CD4-positive, alpha-beta T cell (primary cell): ENCODE measurements at regions of chr3 and their contacts with region 1.

Region 1: GRCh38 chr3:142586803-142587406 is 8.4 kb upstream of the ATR start:
- DNase-seq: peak in 6 of 14 experiments; percentile 6 to 72 (median 48)
- ATAC-seq: peak; percentile 74
- H3K4me3 ChIP-seq: no peak overlapping the region
- H3K4me3 Mint-ChIP-seq: no peak overlapping the region
- H3K27ac ChIP-seq: no peak overlapping the region
- H3K27ac Mint-ChIP-seq: no peak overlapping the region
- H3K4me1 ChIP-seq: no peaks in the 10 kb centered on the region
- H3K4me1 Mint-ChIP-seq: no peaks in the 10 kb centered on the region
- H3K27me3 ChIP-seq: peaks cover 0 to 4% of the 10 kb centered on the region in 2 experiments
- H3K27me3 Mint-ChIP-seq: peaks cover 22% of the 10 kb centered on the region
- CTCF ChIP-seq: peak; percentile 66

Region 2: GRCh38 chr3:142148792-142149672 is 437.9 kb before region 1 on chr3 and contains the start of gene TFDP2:
- CTCF ChIA-PET with region 1: no interaction called
- POLR2A ChIA-PET with region 1: no interaction called
- intact Hi-C with region 1: loop called in 1 of 2 experiments (anchors 10 kb)
- DNase-seq: peak; percentile 66 to 92 (median 81)
- ATAC-seq: peak; percentile 99
- H3K4me3 ChIP-seq: peak within 1 kb of the TSS; percentile 70
- H3K4me3 Mint-ChIP-seq: peak within 1 kb of the TSS; percentile 97
- H3K27ac ChIP-seq: peak within 1 kb of the TSS in 1 of 2 donors; percentile 16
- H3K27ac Mint-ChIP-seq: peak within 1 kb of the TSS; percentile 77
- H3K4me1 ChIP-seq: peaks cover 16% of the 10 kb centered on the region
- H3K4me1 Mint-ChIP-seq: peaks cover 33% of the 10 kb centered on the region
- H3K27me3 ChIP-seq: no peaks in the 10 kb centered on the region
- H3K27me3 Mint-ChIP-seq: no peaks in the 10 kb centered on the region
- CTCF ChIP-seq: no peak
- total RNA-seq, gene TFDP2: 33.1 to 34.2 TPM

Region 3: GRCh38 chr3:142987080-142987700 is 400.3 kb after region 1 on chr3:
- CTCF ChIA-PET with region 1: no interaction called
- POLR2A ChIA-PET with region 1: no interaction called
- intact Hi-C with region 1: loop called (anchors 1 to 2 kb)
- DNase-seq: peak in 3 of 14 experiments; percentile 56 to 58 (median 57)
- ATAC-seq: peak; percentile 55
- H3K4me3 ChIP-seq: no peak overlapping the region
- H3K4me3 Mint-ChIP-seq: no peak overlapping the region
- H3K27ac ChIP-seq: no peak overlapping the region
- H3K27ac Mint-ChIP-seq: no peak overlapping the region
- H3K4me1 ChIP-seq: no peaks in the 10 kb centered on the region
- H3K4me1 Mint-ChIP-seq: no peaks in the 10 kb centered on the region
- H3K27me3 ChIP-seq: no peaks in the 10 kb centered on the region
- H3K27me3 Mint-ChIP-seq: peaks cover 15% of the 10 kb centered on the region
- CTCF ChIP-seq: peak; percentile 81

Region 4: DNA sequence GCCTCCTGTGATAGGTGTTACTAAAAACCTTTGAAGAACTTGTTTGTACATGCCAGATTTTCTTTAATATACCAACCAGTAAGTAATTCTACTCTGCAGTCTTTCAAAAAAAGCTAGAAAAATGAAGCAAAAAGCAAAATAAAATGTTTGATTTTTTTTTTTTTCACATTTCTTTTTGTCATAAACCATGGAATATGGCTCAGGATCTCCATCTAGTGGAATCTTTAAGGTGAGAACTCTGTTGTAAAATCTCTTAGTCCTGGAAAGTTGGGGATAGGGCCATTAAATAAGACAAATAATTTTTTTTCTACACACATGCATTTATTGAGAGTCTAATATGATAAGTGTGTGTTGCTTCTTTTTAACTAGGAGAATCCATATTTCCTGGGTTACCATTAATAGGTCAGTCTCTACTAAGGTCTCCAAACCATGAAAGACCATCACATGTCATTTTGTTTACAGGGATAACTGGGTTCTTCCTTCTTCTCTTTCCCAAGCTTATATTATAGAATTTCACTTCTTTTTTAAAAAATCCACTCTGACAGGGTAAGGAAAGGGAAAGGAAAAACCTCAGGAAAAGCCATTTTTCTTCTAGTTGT is 1176.8 kb after region 1 on chr3:
- CTCF ChIA-PET with region 1: no interaction called
- POLR2A ChIA-PET with region 1: no interaction called
- intact Hi-C with region 1: loop called (anchors 5 to 10 kb)
- DNase-seq: peak in 3 of 14 experiments; percentile 21 to 42 (median 27)
- ATAC-seq: no peak
- H3K4me3 ChIP-seq: no peak overlapping the region
- H3K4me3 Mint-ChIP-seq: peak overlapping the region; percentile 28
- H3K27ac ChIP-seq: no peak overlapping the region
- H3K27ac Mint-ChIP-seq: peak overlapping the region; percentile 14
- H3K4me1 ChIP-seq: peaks cover 3% of the 10 kb centered on the region
- H3K4me1 Mint-ChIP-seq: peaks cover 36% of the 10 kb centered on the region
- H3K27me3 ChIP-seq: no peaks in the 10 kb centered on the region
- H3K27me3 Mint-ChIP-seq: no peaks in the 10 kb centered on the region
- CTCF ChIP-seq: peak; percentile 44

Region 5: GRCh38 chr3:143963946-143964345 is 1377.0 kb after region 1 on chr3:
- CTCF ChIA-PET with region 1: no interaction called
- POLR2A ChIA-PET with region 1: no interaction called
- intact Hi-C with region 1: loop called in 1 of 2 experiments (anchors 10 kb)
- DNase-seq: peak in 1 of 14 experiments; percentile 14
- ATAC-seq: no peak
- H3K4me3 ChIP-seq: no peak overlapping the region
- H3K4me3 Mint-ChIP-seq: no peak overlapping the region
- H3K27ac ChIP-seq: no peak overlapping the region
- H3K27ac Mint-ChIP-seq: no peak overlapping the region
- H3K4me1 ChIP-seq: no peaks in the 10 kb centered on the region
- H3K4me1 Mint-ChIP-seq: no peaks in the 10 kb centered on the region
- H3K27me3 ChIP-seq: peaks cover 5 to 19% of the 10 kb centered on the region in 2 experiments
- H3K27me3 Mint-ChIP-seq: peaks cover 41% of the 10 kb centered on the region
- CTCF ChIP-seq: no peak